ENCODE measurements at regions of chr2 and their contacts with region 1.

Region 1: DNA sequence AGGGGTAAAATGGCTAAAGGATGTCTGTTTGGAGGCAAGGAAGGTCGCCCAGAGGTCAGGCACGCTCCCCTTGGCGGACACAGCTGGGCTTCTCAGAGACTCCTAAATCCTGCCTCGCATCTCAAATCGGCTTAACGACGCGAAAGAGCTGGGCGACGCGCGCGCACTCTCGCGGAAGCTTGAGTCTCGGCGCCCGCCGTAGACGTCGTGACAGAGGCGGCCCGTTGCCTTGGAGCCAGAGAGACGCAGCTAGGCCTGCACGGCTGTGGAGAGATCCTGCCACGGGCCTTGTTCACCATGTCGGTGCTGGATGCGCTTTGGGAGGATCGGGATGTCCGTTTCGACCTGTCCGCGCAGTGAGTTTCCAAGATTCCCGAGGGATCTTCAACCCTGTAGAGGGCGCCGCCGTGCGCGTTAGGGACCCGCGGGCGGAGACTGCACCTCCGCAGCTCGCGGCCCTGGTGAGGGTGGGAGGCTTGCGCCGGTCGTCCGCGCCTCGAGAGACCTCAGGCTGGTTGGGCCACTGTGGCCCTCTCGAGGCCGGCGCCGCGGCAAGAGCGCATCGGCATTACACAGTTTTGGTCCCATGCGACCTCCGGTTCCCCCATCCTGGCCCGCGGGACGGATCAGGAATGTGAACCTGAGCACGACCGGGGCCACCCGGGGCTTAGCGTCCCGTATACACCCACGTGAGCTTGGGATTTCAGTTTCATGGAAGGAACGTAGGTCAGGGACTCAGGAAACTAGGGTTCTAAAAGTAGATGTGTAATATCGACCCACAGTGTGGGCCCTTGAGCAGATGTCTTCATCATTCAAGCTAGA is at the start of gene BBS5:
- DNase-seq: peak; percentile 83 to 95 (median 90)

Region 2: GRCh38 chr2:169528271-169528701 is 48.8 kb after region 1 on chr2:
- intact Hi-C with region 1: no loop called
- DNase-seq: peak in 37 of 42 donors; percentile 14 to 84 (median 60)

Region 3: GRCh38 chr2:169798718-169799592 is 319.5 kb after region 1 on chr2 and contains the start of gene SSB:
- intact Hi-C with region 1: loop called (anchors 2 kb)
- DNase-seq: peak; percentile 83 to 97 (median 94)

Measured in head of caudate nucleus (tissue), 42 donors.